Vagina (tissue), 2 donors: ENCODE measurements at regions of chr11 and their contacts with region 1.

Region 1: GRCh38 chr11:130131961-130132850 is 27.4 kb upstream of the ST14 start:
- DNase-seq: no peak
- H3K4me3 ChIP-seq: no peak overlapping the region
- H3K27ac ChIP-seq: no peak overlapping the region
- H3K4me1 ChIP-seq: no peaks in the 10 kb centered on the region
- H3K27me3 ChIP-seq: no peaks in the 10 kb centered on the region
- CTCF ChIP-seq: peak; percentile 34 to 85 (median 76)
- POLR2A ChIP-seq: no peak

Region 2: DNA sequence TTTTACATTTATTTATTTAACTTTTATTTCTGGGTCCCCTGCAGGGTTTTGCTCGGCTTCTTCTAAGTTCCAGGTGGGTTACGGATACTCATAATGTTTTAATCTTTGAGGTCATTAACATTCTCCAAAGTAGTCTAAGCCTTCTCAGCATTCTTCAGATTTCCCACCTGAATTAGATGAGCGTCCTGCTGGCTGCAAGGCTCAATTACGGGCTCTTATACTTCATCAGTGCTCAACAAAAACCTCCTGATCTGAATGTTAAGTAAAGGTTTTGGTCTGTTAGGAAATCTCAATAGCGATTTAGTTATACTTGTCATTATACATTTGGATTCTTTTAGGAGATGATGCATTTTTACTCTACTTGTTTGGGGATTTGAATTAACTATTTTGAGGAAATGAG is 209.5 kb before region 1 on chr11:
- intact Hi-C with region 1: loop called (anchors 5 kb)
- DNase-seq: no peak
- H3K4me3 ChIP-seq: no peak overlapping the region
- H3K27ac ChIP-seq: no peak overlapping the region
- H3K4me1 ChIP-seq: no peaks in the 10 kb centered on the region
- H3K27me3 ChIP-seq: no peaks in the 10 kb centered on the region
- CTCF ChIP-seq: no peak
- POLR2A ChIP-seq: no peak

Region 3: DNA sequence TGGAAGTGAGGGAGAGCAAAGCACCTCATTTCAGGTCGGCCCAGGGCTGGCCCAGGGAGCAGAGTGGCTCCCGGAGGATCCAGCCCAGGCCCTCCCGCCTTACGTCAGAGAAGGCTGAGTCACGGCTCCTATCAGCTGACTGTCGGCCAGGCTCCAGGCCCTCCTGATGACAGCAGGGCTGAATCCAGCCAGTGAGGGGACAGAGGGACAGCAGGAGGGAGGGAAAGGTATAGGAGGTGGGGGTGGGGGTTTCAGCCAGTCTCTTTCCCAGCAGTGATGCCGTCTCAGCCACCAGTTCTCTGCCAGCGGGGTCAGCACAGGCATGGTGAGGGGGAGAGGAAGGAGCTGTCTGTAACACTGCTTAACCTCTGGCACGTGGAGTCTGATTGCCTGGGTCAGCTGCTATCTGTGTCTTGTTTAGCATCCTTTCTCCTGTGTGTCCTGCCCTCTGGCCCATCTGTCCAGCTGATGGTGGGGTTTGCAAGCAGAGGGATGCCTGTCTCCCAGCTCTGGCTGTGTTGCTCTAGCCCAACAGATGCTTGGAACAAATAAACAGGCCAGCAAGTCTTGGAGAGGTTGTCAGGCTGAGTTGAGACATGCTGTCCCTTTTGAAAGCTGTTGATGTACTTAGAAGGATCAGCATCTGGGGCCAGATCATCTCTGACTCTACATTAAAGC is 390.2 kb after region 1 on chr11:
- intact Hi-C with region 1: no loop called
- DNase-seq: peak in 1 of 2 donors; percentile 97
- H3K4me3 ChIP-seq: no peak overlapping the region
- H3K27ac ChIP-seq: peak overlapping the region; percentile 92
- H3K4me1 ChIP-seq: peaks cover 25% of the 10 kb centered on the region
- H3K27me3 ChIP-seq: no peaks in the 10 kb centered on the region
- CTCF ChIP-seq: no peak
- POLR2A ChIP-seq: no peak